ENCODE measurements at regions of chr6 and their contacts with region 1.

Region 1: GRCh38 chr6:14210663-14211561 is 93.3 kb downstream of the CD83 start:
- DNase-seq: peak; percentile 98
- H3K4me3 Mint-ChIP-seq: peak overlapping the region; percentile 85
- H3K27ac Mint-ChIP-seq: peak overlapping the region; percentile 85
- H3K4me1 Mint-ChIP-seq: peaks cover 21% of the 10 kb centered on the region
- H3K27me3 Mint-ChIP-seq: no peaks in the 10 kb centered on the region

Region 2: DNA sequence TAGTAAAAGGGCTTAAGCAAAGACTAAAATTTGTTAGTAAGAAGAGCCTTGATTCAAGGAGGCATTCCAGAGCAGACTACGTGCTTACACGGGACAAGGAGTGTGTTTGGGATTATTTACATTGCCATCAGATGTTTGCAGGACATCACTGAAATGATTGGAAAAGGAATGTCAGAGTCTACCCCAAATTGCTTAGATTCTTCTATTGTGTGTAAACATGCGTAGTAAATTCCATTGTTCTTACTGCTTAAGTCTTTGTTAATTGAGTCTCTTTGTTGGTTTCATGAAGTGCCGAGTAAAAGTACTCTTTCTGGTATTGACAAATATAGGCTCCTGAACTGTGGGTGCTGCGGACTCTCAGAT is 32.8 kb before region 1 on chr6:
- intact Hi-C with region 1: no loop called
- DNase-seq: no peak
- H3K4me3 Mint-ChIP-seq: no peak overlapping the region
- H3K27ac Mint-ChIP-seq: no peak overlapping the region
- H3K4me1 Mint-ChIP-seq: peaks cover 2% of the 10 kb centered on the region
- H3K27me3 Mint-ChIP-seq: peaks cover 2% of the 10 kb centered on the region

Region 3: GRCh38 chr6:14371530-14371929 is 160.6 kb after region 1 on chr6:
- intact Hi-C with region 1: no loop called
- DNase-seq: no peak
- H3K4me3 Mint-ChIP-seq: no peak overlapping the region
- H3K27ac Mint-ChIP-seq: no peak overlapping the region
- H3K4me1 Mint-ChIP-seq: peaks cover 16% of the 10 kb centered on the region
- H3K27me3 Mint-ChIP-seq: peaks cover 3% of the 10 kb centered on the region

Region 4: DNA sequence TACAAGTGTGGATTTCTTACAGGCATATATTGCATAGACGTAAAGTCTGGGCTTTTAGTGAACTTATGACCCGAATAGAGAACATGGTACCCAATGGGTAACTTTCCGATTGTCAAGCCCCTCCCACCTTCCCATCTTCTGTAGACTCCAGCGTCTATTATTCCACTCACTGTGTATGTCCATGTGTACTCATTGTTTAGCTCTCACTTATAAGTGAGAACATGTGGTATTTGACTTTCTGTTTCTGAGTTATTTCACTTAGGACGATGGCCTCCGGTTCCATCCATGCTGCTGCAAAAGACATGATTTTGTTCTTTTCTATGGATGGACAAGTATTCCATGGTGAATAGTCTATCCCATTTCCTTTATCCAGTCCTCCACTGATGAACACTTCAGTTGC is 213.0 kb after region 1 on chr6:
- intact Hi-C with region 1: loop called (anchors 1 kb)
- DNase-seq: no peak
- H3K4me3 Mint-ChIP-seq: peak overlapping the region; percentile 23
- H3K27ac Mint-ChIP-seq: peak overlapping the region; percentile 88
- H3K4me1 Mint-ChIP-seq: peaks cover 25% of the 10 kb centered on the region
- H3K27me3 Mint-ChIP-seq: no peaks in the 10 kb centered on the region

Region 5: GRCh38 chr6:14711056-14711703 is 500.3 kb after region 1 on chr6:
- intact Hi-C with region 1: loop called (anchors 1 kb)
- DNase-seq: peak; percentile 90
- H3K4me3 Mint-ChIP-seq: peak overlapping the region; percentile 24
- H3K27ac Mint-ChIP-seq: peak overlapping the region; percentile 95
- H3K4me1 Mint-ChIP-seq: peaks cover 42% of the 10 kb centered on the region
- H3K27me3 Mint-ChIP-seq: no peaks in the 10 kb centered on the region

Region 6: DNA sequence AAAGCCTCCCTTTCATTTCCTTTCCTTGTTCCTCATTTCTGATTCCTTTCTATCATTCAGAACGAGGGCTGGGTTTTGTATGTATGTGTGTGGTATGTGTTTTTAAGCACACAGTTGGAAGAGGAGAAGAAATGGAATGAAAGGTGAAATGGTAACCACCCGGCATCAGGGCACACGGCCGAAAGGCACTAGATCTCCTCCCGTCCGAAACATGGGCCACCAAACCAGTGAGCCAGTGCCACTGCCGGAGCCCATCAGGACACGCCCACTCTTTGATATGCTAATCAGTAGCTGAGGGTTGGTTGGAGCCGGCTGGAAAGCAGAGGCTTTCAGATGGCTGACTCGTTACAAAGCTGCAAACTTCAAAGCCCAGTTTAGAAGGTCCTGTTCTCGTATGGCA is 806.3 kb after region 1 on chr6:
- intact Hi-C with region 1: loop called (anchors 5 kb)
- DNase-seq: peak; percentile 60
- H3K4me3 Mint-ChIP-seq: no peak overlapping the region
- H3K27ac Mint-ChIP-seq: no peak overlapping the region
- H3K4me1 Mint-ChIP-seq: peaks cover 38% of the 10 kb centered on the region
- H3K27me3 Mint-ChIP-seq: peaks cover 2% of the 10 kb centered on the region

Region 7: GRCh38 chr6:15389765-15390723 is 1179.1 kb after region 1 on chr6:
- intact Hi-C with region 1: loop called (anchors 10 kb)
- DNase-seq: peak; percentile 73
- H3K4me3 Mint-ChIP-seq: peak overlapping the region; percentile 37
- H3K27ac Mint-ChIP-seq: peak overlapping the region; percentile 67
- H3K4me1 Mint-ChIP-seq: peaks cover 64% of the 10 kb centered on the region
- H3K27me3 Mint-ChIP-seq: no peaks in the 10 kb centered on the region

Region 8: GRCh38 chr6:15491255-15491985 is 1280.5 kb after region 1 on chr6:
- intact Hi-C with region 1: loop called (anchors 5 kb)
- DNase-seq: peak; percentile 91
- H3K4me3 Mint-ChIP-seq: no peak overlapping the region
- H3K27ac Mint-ChIP-seq: peak overlapping the region; percentile 74
- H3K4me1 Mint-ChIP-seq: peaks cover 38% of the 10 kb centered on the region
- H3K27me3 Mint-ChIP-seq: no peaks in the 10 kb centered on the region